Transverse colon (tissue), 4 donors: ENCODE measurements at regions of chr1 and their contacts with region 1.

Region 1: GRCh38 chr1:71049951-71050598 is 2.5 kb upstream of the PTGER3 start:
- DNase-seq: no peak
- H3K4me3 ChIP-seq: no peak overlapping the region
- H3K27ac ChIP-seq: no peak overlapping the region
- H3K4me1 ChIP-seq: peaks cover 0 to 22% (median 9%) of the 10 kb centered on the region in 4 donors
- H3K27me3 ChIP-seq: peaks cover 43% of the 10 kb centered on the region
- CTCF ChIP-seq: peak; percentile 67 to 79 (median 72)
- EP300 ChIP-seq: no peak
- POLR2A ChIP-seq: no peak

Region 2: DNA sequence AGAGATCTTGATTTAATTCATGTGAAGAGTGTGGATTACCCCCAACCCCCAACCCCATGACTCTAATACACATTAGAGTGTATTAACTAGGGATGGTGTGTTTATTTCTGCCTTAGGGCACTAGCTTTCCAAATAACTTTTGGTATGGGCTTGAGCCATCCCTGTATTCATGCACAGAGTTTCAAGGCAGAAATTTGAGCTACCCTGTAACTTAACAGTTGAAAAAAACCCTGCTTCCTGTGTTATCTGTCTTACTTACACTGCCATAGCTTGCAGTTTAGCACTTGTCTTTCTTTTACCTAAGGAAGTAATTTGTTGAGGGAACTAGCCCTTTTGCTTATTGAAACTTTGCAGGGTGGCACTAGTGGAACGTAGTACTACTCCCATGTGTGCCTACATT is 822.6 kb before region 1 on chr1:
- in situ Hi-C with region 1: loop called (anchors 25 kb)
- intact Hi-C with region 1: no loop called
- DNase-seq: no peak
- H3K4me3 ChIP-seq: no peak overlapping the region
- H3K27ac ChIP-seq: no peak overlapping the region
- H3K4me1 ChIP-seq: peaks cover 13 to 40% (median 20%) of the 10 kb centered on the region in 4 donors
- H3K27me3 ChIP-seq: no peaks in the 10 kb centered on the region
- CTCF ChIP-seq: no peak
- EP300 ChIP-seq: no peak
- POLR2A ChIP-seq: no peak

Region 3: DNA sequence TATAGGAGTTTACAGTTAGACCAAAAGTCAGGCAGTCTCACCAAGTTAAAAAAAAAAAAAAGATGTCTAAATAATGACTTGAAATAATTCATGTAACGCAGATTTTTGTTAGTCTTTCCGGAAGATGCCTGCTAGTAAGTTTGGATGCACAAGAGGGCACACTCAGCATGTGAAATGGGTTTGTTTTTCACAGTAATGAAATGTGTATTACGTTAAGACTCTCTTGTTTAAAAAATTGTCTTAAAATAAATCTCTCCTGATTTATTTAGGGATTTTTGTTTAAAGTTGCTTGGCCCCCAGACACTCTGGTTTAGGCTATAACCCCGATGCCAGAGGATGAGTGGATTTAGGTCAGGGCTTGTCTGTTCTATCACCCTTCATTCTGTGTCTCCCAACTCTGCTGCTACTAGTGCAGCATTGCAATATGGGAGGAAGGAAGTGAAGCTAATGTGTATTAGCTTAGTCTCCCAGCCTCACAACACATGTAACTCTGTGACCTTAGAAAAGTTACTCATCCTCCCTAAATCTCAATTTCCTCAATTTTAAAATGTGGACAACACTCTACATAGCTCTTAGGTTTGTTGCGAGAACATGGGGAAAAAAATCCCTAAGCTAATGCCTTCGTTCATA is 613.3 kb before region 1 on chr1:
- in situ Hi-C with region 1: loop called in 1 of 4 experiments (anchors 25 kb)
- intact Hi-C with region 1: no loop called
- DNase-seq: no peak
- H3K4me3 ChIP-seq: no peak overlapping the region
- H3K27ac ChIP-seq: no peak overlapping the region
- H3K4me1 ChIP-seq: peaks cover 0 to 23% (median 3%) of the 10 kb centered on the region in 4 donors
- H3K27me3 ChIP-seq: no peaks in the 10 kb centered on the region
- CTCF ChIP-seq: peak; percentile 18 to 39 (median 25)
- EP300 ChIP-seq: no peak
- POLR2A ChIP-seq: no peak

Region 4: DNA sequence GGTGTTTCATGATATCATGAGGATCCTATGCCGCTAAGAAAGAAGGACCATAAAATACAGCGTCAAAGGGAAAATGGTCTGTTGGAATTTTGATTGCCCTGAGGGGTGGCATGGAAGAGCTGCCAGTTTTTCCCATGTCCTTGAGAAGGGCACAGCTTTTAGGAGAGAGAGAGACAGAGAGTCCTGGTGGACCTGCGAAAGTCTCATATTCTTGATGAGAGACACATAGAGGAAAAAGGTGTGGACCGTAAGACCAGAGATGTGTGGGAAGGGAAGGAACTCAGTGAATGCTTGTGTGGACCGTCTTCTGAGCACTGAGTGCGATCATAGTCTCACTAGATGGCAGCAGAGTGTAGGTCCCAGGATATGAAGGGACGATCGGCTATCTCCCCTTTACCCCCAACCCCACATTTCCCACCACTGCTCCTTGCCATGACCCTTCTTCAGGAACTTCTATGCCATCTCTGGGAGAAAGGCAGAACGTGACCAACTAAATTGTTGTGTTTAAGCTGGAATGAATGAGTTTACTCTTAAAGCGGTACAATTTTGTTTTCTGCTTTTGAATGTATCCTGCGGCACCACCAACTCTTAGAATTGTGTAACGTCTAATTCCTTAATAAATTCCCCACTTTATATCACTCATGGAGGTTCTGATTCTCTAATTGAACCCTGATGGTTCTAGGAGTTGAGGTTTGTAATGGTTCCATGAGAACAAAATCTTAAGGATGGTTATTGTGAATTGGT is 521.3 kb before region 1 on chr1:
- in situ Hi-C with region 1: loop called (anchors 5 to 25 kb)
- intact Hi-C with region 1: loop called (anchors 5 kb)
- DNase-seq: no peak
- H3K4me3 ChIP-seq: no peak overlapping the region
- H3K27ac ChIP-seq: no peak overlapping the region
- H3K4me1 ChIP-seq: no peaks in the 10 kb centered on the region
- H3K27me3 ChIP-seq: no peaks in the 10 kb centered on the region
- CTCF ChIP-seq: peak; percentile 32 to 46 (median 38)
- EP300 ChIP-seq: no peak
- POLR2A ChIP-seq: no peak

Region 5: GRCh38 chr1:70685300-70686241 is 364.5 kb before region 1 on chr1:
- in situ Hi-C with region 1: loop called (anchors 10 to 25 kb)
- intact Hi-C with region 1: loop called (anchors 5 kb)
- DNase-seq: peak; percentile 51
- H3K4me3 ChIP-seq: no peak overlapping the region
- H3K27ac ChIP-seq: no peak overlapping the region
- H3K4me1 ChIP-seq: no peaks in the 10 kb centered on the region
- H3K27me3 ChIP-seq: no peaks in the 10 kb centered on the region
- CTCF ChIP-seq: peak; percentile 77 to 86 (median 83)
- EP300 ChIP-seq: no peak
- POLR2A ChIP-seq: no peak

Region 6: DNA sequence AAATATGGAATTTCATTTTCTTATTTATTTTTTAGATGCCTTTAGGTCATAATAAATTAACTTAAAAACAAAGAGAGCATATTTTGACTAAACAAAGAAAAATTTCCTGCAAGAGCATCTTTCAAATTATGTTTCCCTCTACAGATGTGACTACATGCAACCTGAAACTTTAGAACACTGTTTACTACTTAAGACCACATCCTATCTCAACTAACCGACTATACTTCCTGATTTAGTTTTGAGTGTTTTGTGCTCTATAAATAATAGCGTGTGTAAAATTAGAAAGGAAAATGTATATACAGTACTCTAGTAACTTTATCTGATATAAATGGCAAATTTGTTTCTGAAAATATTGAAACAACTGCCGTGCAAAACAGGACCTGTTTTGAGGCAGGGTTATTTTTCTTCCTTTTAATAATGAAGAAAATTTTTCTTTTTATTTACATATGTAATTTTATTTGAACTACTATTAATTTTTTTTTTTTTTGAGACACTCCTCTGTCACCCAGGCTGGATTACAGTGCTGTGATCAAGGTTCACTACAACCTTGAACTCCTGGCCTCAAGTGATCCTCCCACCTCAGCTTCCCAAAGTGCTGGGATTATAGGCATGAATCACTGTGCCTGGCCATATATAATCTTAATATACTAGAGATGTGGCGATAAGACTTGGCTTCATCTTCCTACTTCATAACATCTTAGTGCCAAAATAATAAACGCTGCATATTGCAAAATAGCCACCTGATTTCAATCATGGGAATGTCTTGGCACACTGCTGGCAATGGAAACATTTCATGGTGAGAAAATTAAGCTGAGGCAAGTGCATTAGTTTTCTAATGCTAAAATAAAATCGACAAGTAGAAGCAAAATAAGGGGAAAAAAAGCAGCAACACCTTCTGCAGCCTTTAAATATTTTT is 18.5 kb after region 1 on chr1:
- in situ Hi-C with region 1: no loop called
- intact Hi-C with region 1: no loop called
- DNase-seq: no peak
- H3K4me3 ChIP-seq: no peak overlapping the region
- H3K27ac ChIP-seq: no peak overlapping the region
- H3K4me1 ChIP-seq: peaks cover 0 to 14% (median 0%) of the 10 kb centered on the region in 4 donors
- H3K27me3 ChIP-seq: no peaks in the 10 kb centered on the region
- CTCF ChIP-seq: no peak
- EP300 ChIP-seq: no peak
- POLR2A ChIP-seq: no peak

Region 7: DNA sequence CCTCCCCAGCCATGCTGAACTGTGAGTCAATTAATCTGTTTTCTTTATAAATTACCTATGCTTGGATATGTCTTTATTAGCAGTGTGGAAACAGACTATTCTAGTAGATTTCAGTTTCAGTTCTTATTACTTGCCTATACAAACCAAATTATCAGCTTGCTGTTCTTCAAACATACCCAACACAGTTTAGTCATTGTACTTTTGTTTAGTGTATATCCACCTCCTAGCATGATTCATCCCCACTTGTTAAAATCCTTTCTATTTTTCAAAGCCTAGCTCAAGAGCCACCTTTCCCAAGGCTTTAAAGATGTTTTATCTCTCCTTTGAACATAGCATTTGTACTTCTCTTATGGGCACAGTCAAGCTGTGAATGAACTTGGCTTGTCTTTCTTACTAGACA is 226.4 kb after region 1 on chr1:
- in situ Hi-C with region 1: no loop called
- intact Hi-C with region 1: no loop called
- DNase-seq: no peak
- H3K4me3 ChIP-seq: no peak overlapping the region
- H3K27ac ChIP-seq: no peak overlapping the region
- H3K4me1 ChIP-seq: no peaks in the 10 kb centered on the region
- H3K27me3 ChIP-seq: no peaks in the 10 kb centered on the region
- CTCF ChIP-seq: no peak
- EP300 ChIP-seq: no peak
- POLR2A ChIP-seq: no peak